ENCODE measurements at regions of chr2 and their contacts with region 1.

Region 1: DNA sequence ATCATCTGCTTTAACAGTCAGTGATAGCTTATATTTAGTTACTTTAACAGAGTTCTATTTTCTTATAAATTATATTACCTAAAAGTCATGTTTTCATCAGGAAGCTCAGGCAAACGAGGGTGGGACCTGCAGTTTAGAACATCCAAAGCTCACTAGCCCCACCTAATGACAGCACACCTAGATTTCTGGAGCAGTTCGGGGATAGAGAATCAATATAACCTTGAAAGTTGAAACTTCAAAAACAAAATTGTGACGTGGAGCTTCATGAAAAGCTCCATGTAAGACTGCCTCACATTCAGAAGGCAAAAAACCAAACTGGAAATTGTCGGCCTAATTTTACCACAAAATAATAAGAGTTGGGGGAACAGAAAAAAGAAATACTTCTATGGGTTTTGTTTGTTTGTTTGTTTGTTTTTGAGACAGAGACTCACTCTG is 185.9 kb upstream of the CCDC150 start:
- DNase-seq: peak; percentile 78
- H3K4me3 ChIP-seq: no peak overlapping the region
- H3K27ac ChIP-seq: no peak overlapping the region
- H3K4me1 ChIP-seq: peaks cover 4% of the 10 kb centered on the region
- H3K27me3 ChIP-seq: no peaks in the 10 kb centered on the region
- CTCF ChIP-seq: peak; percentile 54 to 73
- POLR2A ChIP-seq: no peak

Region 2: DNA sequence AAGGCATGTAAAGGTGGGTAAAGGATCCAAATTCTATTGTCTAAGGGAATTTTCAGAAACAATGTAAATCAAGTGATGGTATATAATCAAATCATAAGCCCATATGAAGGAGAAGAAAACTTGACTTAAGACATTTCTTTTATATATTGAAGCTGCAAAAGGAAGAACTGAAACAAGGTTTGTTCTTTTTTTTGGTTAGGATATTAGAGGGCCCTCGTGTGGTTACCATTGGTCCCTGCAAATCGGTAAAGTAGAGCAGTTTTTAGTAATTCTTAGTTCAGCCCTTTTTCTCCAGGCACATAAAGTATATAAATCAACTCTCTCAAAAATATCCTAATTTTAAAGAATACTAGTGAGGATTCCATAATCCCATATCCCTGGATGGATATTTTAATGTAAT is 176.6 kb before region 1 on chr2:
- CTCF ChIA-PET with region 1: interaction called, 15 read pairs
- POLR2A ChIA-PET with region 1: no interaction called
- dilution Hi-C with region 1: no loop called
- intact Hi-C with region 1: no loop called
- DNase-seq: peak; percentile 46
- H3K4me3 ChIP-seq: peak overlapping the region in 2 of 3 experiments; percentile 38 to 60
- H3K27ac ChIP-seq: peak overlapping the region; percentile 14
- H3K4me1 ChIP-seq: peaks cover 58% of the 10 kb centered on the region
- H3K27me3 ChIP-seq: no peaks in the 10 kb centered on the region
- CTCF ChIP-seq: peak; percentile 32 to 41
- POLR2A ChIP-seq: no peak

Region 3: DNA sequence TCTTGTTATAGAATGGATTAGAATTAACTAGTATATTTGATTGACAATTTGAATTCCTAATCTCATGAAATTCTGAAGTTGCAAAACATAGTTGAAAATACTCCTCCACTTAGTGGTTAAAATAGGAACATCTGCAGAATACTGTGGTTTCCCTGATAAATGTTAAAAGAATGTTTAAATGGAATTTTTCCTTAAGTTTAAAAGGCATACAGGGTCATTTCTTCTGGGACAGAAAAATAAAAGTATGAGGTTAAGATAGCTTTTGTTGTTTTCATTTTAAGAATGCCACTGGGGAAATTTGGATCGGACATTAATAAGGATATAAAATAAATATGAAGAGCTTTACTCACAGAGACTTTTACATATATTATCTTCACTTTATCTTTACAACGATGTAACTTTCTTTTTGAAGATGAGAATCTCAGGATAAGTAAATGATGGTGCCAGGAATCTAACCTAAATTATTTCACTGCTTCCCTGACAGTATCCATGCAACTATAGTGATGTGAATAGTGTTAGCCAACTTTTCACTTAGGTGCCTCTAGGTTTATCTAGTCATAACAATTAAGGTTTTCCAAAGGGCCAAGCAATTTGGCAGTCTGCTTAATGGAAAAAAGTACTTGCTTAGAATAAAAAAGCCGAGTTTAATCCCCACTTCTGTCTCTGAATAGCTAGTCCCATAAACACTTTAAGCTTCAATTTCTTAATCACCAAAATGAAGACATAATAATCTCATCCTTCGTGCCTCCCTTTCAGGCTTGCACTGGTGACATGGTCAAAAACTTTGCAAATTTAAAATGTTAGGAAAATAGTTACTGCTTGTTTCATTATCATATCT is 130.4 kb before region 1 on chr2:
- CTCF ChIA-PET with region 1: interaction called, 10 read pairs
- POLR2A ChIA-PET with region 1: no interaction called
- dilution Hi-C with region 1: no loop called
- intact Hi-C with region 1: no loop called
- DNase-seq: no peak
- H3K4me3 ChIP-seq: no peak overlapping the region
- H3K27ac ChIP-seq: no peak overlapping the region
- H3K4me1 ChIP-seq: peaks cover 9% of the 10 kb centered on the region
- H3K27me3 ChIP-seq: no peaks in the 10 kb centered on the region
- CTCF ChIP-seq: no peak
- POLR2A ChIP-seq: no peak

Region 4: GRCh38 chr2:196344397-196344796 is 109.2 kb before region 1 on chr2:
- CTCF ChIA-PET with region 1: interaction called, 96 read pairs
- POLR2A ChIA-PET with region 1: no interaction called
- dilution Hi-C with region 1: no loop called
- intact Hi-C with region 1: no loop called
- DNase-seq: no peak
- H3K4me3 ChIP-seq: no peak overlapping the region
- H3K27ac ChIP-seq: no peak overlapping the region
- H3K4me1 ChIP-seq: peaks cover 2% of the 10 kb centered on the region
- H3K27me3 ChIP-seq: no peaks in the 10 kb centered on the region
- CTCF ChIP-seq: no peak
- POLR2A ChIP-seq: no peak

Region 5: DNA sequence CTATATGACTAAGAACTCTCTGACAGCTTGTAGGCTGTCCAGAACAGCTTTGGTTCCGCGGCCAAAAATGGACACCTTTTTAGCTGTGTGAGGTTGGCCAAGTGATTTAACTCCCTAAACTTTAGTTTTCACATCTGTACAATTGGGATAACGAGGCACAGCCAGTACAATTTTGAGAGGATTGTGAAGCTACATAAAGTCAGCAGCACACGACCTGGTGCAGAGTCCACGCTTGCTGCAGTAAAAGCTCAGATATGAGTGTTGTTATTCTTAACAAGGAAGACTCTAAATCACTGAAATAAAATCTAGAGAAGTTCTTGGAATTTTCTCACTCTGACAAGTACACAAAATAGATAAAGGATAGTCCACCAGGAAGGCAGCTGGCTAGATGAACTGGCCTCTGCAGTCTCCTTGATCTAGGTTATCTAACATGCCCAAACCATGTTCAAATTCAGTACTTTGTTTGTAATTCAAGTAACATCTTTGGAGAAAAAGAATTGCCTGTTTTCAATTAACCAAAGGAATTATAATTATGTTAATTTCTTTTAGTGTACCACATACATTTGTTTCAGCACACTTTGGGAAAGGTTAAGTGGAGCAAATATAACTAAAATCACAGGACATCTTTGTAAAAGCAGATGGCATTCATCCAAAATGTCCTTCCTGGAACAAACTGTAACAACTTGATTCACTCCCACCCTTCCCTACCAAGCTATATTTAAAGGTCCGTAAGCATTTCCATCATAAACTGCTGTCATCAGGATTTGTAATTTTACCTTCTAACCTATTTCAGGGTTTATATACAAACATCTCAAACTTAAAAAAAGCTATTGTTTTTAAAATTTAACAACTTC is 80.6 kb before region 1 on chr2:
- CTCF ChIA-PET with region 1: interaction called, 12 read pairs
- POLR2A ChIA-PET with region 1: no interaction called
- dilution Hi-C with region 1: no loop called
- intact Hi-C with region 1: no loop called
- DNase-seq: peak; percentile 80
- H3K4me3 ChIP-seq: no peak overlapping the region
- H3K27ac ChIP-seq: peak overlapping the region; percentile 29
- H3K4me1 ChIP-seq: peaks cover 25% of the 10 kb centered on the region
- H3K27me3 ChIP-seq: no peaks in the 10 kb centered on the region
- CTCF ChIP-seq: no peak
- POLR2A ChIP-seq: no peak

Region 6: DNA sequence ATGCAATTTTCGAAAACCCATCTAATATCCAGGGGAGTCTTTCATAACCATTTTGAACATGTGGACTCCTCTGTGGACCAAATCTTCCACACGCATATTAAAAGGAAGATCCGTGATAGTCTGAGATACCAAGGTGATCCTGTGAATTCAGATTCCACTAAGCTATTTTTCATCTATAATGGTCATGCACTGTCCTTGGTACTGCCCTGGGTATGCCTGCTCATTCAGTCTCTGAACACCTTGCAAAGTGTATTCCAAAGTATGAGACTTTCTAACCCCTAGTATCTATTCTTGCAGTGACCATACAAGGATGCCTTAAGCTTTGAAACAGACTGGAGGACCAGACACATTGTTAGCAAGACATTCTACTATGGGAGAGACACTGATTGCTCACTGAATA is 31.8 kb before region 1 on chr2:
- CTCF ChIA-PET with region 1: interaction called, 21 read pairs
- POLR2A ChIA-PET with region 1: no interaction called
- dilution Hi-C with region 1: no loop called
- intact Hi-C with region 1: no loop called
- DNase-seq: no peak
- H3K4me3 ChIP-seq: no peak overlapping the region
- H3K27ac ChIP-seq: no peak overlapping the region
- H3K4me1 ChIP-seq: peaks cover 19% of the 10 kb centered on the region
- H3K27me3 ChIP-seq: no peaks in the 10 kb centered on the region
- CTCF ChIP-seq: no peak
- POLR2A ChIP-seq: no peak

Region 7: GRCh38 chr2:196750982-196751635 is 297.5 kb after region 1 on chr2:
- CTCF ChIA-PET with region 1: interaction called, 10 read pairs
- POLR2A ChIA-PET with region 1: no interaction called
- dilution Hi-C with region 1: no loop called
- intact Hi-C with region 1: no loop called
- DNase-seq: peak; percentile 77
- H3K4me3 ChIP-seq: no peak overlapping the region
- H3K27ac ChIP-seq: no peak overlapping the region
- H3K4me1 ChIP-seq: no peaks in the 10 kb centered on the region
- H3K27me3 ChIP-seq: no peaks in the 10 kb centered on the region
- CTCF ChIP-seq: peak; percentile 80 to 90
- POLR2A ChIP-seq: no peak